ENCODE measurements at regions of chr5 and their contacts with region 1.

Region 1: GRCh38 chr5:79143684-79144379 is 32.2 kb downstream of the BHMT start:
- DNase-seq: no peak
- H3K4me3 ChIP-seq: no peak overlapping the region
- H3K27ac ChIP-seq: no peak overlapping the region
- H3K4me1 ChIP-seq: no peaks in the 10 kb centered on the region
- H3K27me3 ChIP-seq: no peaks in the 10 kb centered on the region
- CTCF ChIP-seq: no peak

Region 2: DNA sequence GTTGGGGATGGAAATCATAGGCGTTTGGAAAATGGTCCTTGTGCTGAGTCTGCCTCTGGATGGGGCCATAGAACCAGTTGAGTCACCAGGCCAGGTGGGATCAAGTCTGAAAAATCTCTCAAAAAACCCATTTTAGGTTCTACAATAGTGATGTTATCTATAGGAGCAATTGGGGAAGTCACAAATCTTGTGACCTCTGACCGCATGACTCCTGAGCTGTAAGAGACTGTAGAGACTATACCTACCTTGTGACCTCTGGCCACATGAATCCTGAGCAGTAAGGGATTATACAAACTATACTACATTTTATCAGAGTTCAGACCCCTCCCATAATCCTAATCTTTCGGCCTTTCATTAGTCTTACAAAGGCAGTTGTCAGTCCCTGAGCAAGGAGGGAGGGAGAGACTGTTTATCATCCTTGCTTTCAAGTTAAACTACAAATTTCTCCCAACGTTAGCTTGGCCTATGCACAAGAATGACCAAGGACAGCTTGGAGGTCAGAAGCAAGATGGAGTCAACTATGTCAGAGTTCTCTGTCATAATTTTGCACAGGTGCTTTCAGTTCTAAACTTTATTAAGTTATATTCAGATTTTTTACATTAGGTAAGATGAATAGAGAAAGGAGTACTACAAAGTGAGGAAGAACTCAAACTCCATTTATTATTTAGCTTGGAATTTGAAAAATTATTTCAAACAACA is 80.6 kb after region 1 on chr5:
- CTCF ChIA-PET with region 1: no interaction called
- POLR2A ChIA-PET with region 1: interaction called, 14 read pairs
- intact Hi-C with region 1: no loop called
- DNase-seq: no peak
- H3K4me3 ChIP-seq: no peak overlapping the region
- H3K27ac ChIP-seq: no peak overlapping the region
- H3K4me1 ChIP-seq: no peaks in the 10 kb centered on the region
- H3K27me3 ChIP-seq: no peaks in the 10 kb centered on the region
- CTCF ChIP-seq: no peak

Region 3: DNA sequence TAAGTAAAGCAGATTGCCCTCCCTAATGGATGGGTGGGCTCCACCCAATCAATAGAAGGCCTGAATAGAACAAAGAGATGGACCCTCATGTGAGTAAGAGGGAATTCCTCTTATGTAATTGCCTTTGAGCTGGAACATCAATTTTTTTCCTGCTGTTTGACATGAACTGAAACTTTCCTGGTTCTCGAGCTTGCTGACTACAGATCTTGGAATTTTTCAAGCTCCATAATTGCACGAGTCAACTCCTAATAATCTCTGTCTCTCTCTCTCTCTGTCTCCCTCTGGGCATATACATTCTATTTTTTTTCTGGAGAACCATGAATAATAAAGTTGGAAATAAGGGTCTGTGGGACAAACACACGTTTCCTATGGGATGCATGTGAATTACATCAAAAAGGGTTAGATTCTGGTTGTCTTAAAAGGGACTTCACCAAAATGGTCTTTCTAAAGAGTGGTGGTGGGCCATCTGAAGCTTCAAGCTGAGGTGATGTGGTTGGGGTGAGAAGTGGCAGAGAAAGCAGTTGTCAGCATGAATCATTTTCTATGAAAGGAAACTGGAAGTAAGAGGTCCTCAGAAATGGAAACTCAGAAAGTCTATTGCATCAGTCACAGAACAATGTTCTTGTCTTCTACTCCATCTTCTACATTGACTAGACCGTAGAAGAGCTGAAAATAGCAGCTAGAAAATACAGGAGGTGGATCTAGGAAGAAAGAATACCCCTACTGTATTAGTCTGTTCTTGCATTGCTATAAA is 417.1 kb after region 1 on chr5:
- CTCF ChIA-PET with region 1: no interaction called
- POLR2A ChIA-PET with region 1: no interaction called
- intact Hi-C with region 1: no loop called
- DNase-seq: no peak
- H3K4me3 ChIP-seq: no peak overlapping the region
- H3K27ac ChIP-seq: no peak overlapping the region
- H3K4me1 ChIP-seq: peaks cover 26% of the 10 kb centered on the region
- H3K27me3 ChIP-seq: peaks cover 69% of the 10 kb centered on the region
- CTCF ChIP-seq: no peak